ENCODE measurements at regions of chr12 and their contacts with region 1.

Region 1: GRCh38 chr12:95805864-95806671 is 15.5 kb upstream of the NTN4 start:
- DNase-seq: peak; percentile 99
- ATAC-seq: peak; percentile 67
- H3K4me3 ChIP-seq: peak overlapping the region; percentile 19; the same call in 1 of the 2 replicates
- H3K27ac ChIP-seq: peak overlapping the region; percentile 98
- H3K4me1 ChIP-seq: peaks cover 77% of the 10 kb centered on the region
- H3K27me3 ChIP-seq: no peaks in the 10 kb centered on the region
- CTCF ChIP-seq: no peak

Region 2: GRCh38 chr12:95224202-95225170 is 581.6 kb before region 1 on chr12:
- CTCF ChIA-PET with region 1: no interaction called
- POLR2A ChIA-PET with region 1: interaction called, 10 read pairs
- intact Hi-C with region 1: no loop called
- DNase-seq: peak; percentile 79
- ATAC-seq: no peak
- H3K4me3 ChIP-seq: no peak overlapping the region
- H3K27ac ChIP-seq: peak overlapping the region; percentile 9
- H3K4me1 ChIP-seq: peaks cover 34% of the 10 kb centered on the region
- H3K27me3 ChIP-seq: no peaks in the 10 kb centered on the region
- CTCF ChIP-seq: no peak

Region 3: GRCh38 chr12:95614390-95614982 is 191.6 kb before region 1 on chr12:
- CTCF ChIA-PET with region 1: no interaction called
- POLR2A ChIA-PET with region 1: no interaction called
- intact Hi-C with region 1: no loop called
- DNase-seq: no peak
- ATAC-seq: no peak
- H3K4me3 ChIP-seq: no peak overlapping the region
- H3K27ac ChIP-seq: no peak overlapping the region
- H3K4me1 ChIP-seq: peaks cover 37% of the 10 kb centered on the region
- H3K27me3 ChIP-seq: no peaks in the 10 kb centered on the region
- CTCF ChIP-seq: no peak

Region 4: DNA sequence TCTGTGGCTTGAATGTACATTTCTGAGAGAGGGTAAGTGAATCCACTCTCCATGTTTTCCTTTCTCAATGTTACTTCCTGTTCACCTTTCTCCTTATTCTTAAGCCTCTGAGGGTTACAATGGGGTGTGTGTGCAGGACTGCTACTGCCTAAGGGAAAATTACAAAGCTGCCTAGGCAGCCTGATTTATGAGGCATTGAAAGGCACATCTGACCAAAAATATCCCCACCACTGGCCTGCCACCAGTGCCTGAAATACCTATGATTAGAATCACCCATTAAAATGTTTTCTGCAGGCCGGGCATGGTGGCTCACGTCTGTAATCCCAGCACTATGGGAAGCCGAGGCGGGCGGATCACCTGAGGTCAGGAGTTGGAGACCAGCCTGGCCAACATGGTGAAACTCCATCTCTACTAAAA is 156.7 kb before region 1 on chr12:
- CTCF ChIA-PET with region 1: no interaction called
- POLR2A ChIA-PET with region 1: interaction called, 15 read pairs
- intact Hi-C with region 1: loop called (anchors 5 kb)
- DNase-seq: peak; percentile 98
- ATAC-seq: peak; percentile 89
- H3K4me3 ChIP-seq: no peak overlapping the region
- H3K27ac ChIP-seq: peak overlapping the region; percentile 90
- H3K4me1 ChIP-seq: peaks cover 48% of the 10 kb centered on the region
- H3K27me3 ChIP-seq: no peaks in the 10 kb centered on the region
- CTCF ChIP-seq: no peak

Region 5: GRCh38 chr12:95790033-95790911 is 15.8 kb before region 1 on chr12 and contains the start of gene NTN4:
- CTCF ChIA-PET with region 1: no interaction called
- POLR2A ChIA-PET with region 1: interaction called, 11 read pairs
- intact Hi-C with region 1: loop called (anchors 1 kb)
- DNase-seq: peak; percentile 60
- ATAC-seq: peak; percentile 47
- H3K4me3 ChIP-seq: peak within 1 kb of the TSS; percentile 94
- H3K27ac ChIP-seq: peak within 1 kb of the TSS; percentile 91
- H3K4me1 ChIP-seq: peaks cover 65% of the 10 kb centered on the region
- H3K27me3 ChIP-seq: no peaks in the 10 kb centered on the region
- CTCF ChIP-seq: no peak
- total RNA-seq, gene NTN4: 39.6 and 40.3 TPM in 2 replicates

Measured in PC-3 (cell line).